ENCODE measurements at regions of chr2 and their contacts with region 1.

Region 1: GRCh38 chr2:138922973-138923563 is 142.9 kb upstream of the NXPH2 start:
- DNase-seq: peak; percentile 40
- ATAC-seq: peak; percentile 36; the same call in 2 of the 3 replicates
- H3K4me3 ChIP-seq: no peak overlapping the region
- H3K27ac ChIP-seq: no peak overlapping the region
- H3K4me1 ChIP-seq: no peaks in the 10 kb centered on the region
- H3K27me3 ChIP-seq: no peaks in the 10 kb centered on the region
- CTCF ChIP-seq: peak; percentile 59
- EP300 ChIP-seq: no peak
- POLR2A ChIP-seq: no peak
- RAD21 ChIP-seq: no peak

Region 2: DNA sequence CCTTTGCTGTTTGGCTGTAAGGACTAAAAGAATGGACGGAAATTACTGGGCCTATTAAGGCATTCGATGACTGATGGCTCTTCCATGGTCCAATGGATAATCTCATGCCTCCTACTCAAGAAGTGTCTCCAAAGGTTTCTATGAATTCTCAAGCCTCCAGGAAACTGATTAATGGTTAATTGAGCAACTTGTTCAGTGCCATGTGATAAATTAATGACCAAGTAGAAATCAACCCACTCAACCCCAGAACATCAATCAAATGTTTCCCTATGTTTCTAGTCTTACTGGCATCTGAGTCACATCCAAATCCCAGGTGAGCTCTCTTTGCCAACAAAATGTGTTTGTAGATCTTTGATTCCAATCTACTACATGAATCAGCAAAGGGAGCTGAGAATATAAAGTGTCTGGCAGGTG is 246.4 kb before region 1 on chr2:
- CTCF ChIA-PET with region 1: no interaction called
- POLR2A ChIA-PET with region 1: no interaction called
- in situ Hi-C with region 1: no loop called
- intact Hi-C with region 1: no loop called
- DNase-seq: no peak
- ATAC-seq: no peak
- H3K4me3 ChIP-seq: no peak overlapping the region
- H3K27ac ChIP-seq: no peak overlapping the region
- H3K4me1 ChIP-seq: no peaks in the 10 kb centered on the region
- H3K27me3 ChIP-seq: peaks cover 0 to 2% of the 10 kb centered on the region in 2 experiments; a peak in 1 of 5 replicates
- CTCF ChIP-seq: no peak
- EP300 ChIP-seq: no peak
- POLR2A ChIP-seq: no peak
- RAD21 ChIP-seq: no peak

Region 3: DNA sequence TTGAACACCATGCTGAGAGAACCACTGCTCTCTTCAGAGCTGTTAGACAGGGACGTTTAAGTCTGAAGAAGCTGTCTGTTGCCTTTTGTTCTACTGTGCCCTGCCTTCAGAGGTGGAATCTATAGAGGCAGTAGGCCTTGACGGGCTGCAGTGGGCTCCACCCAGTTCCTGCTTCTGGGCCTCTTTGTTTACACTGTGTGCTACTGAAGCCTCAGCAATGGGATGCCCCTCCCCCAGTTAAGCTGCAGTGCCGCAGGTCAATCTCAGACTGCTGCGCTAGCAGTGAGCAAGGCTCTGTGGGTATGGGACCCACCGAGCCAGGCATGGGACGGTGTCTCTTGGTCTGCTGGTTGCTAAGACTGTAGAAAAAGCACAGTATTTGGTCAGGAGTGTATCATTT is 19.4 kb after region 1 on chr2:
- CTCF ChIA-PET with region 1: no interaction called
- POLR2A ChIA-PET with region 1: no interaction called
- in situ Hi-C with region 1: no loop called
- intact Hi-C with region 1: no loop called
- DNase-seq: peak; percentile 82
- ATAC-seq: peak; percentile 100
- H3K4me3 ChIP-seq: peak overlapping the region; percentile 3 to 49 (median 36); a peak in 3 of 6 replicates
- H3K27ac ChIP-seq: no peak overlapping the region
- H3K4me1 ChIP-seq: peaks cover 15% of the 10 kb centered on the region
- H3K27me3 ChIP-seq: no peaks in the 10 kb centered on the region
- CTCF ChIP-seq: no peak
- EP300 ChIP-seq: no peak
- POLR2A ChIP-seq: no peak
- RAD21 ChIP-seq: no peak

Region 4: GRCh38 chr2:139353874-139354273 is 430.8 kb after region 1 on chr2:
- CTCF ChIA-PET with region 1: no interaction called
- POLR2A ChIA-PET with region 1: no interaction called
- in situ Hi-C with region 1: no loop called
- intact Hi-C with region 1: loop called (anchors 5 kb)
- DNase-seq: no peak
- ATAC-seq: no peak
- H3K4me3 ChIP-seq: no peak overlapping the region
- H3K27ac ChIP-seq: no peak overlapping the region
- H3K4me1 ChIP-seq: no peaks in the 10 kb centered on the region
- H3K27me3 ChIP-seq: no peaks in the 10 kb centered on the region
- CTCF ChIP-seq: peak; percentile 36
- EP300 ChIP-seq: no peak
- POLR2A ChIP-seq: no peak
- RAD21 ChIP-seq: no peak

Region 5: GRCh38 chr2:139836769-139837168 is 913.7 kb after region 1 on chr2:
- CTCF ChIA-PET with region 1: no interaction called
- POLR2A ChIA-PET with region 1: no interaction called
- in situ Hi-C with region 1: no loop called
- intact Hi-C with region 1: no loop called
- DNase-seq: no peak
- ATAC-seq: no peak
- H3K4me3 ChIP-seq: no peak overlapping the region
- H3K27ac ChIP-seq: no peak overlapping the region
- H3K4me1 ChIP-seq: no peaks in the 10 kb centered on the region
- H3K27me3 ChIP-seq: no peaks in the 10 kb centered on the region
- CTCF ChIP-seq: no peak
- EP300 ChIP-seq: no peak
- POLR2A ChIP-seq: no peak
- RAD21 ChIP-seq: no peak

Region 6: GRCh38 chr2:139946693-139947092 is 1023.6 kb after region 1 on chr2:
- CTCF ChIA-PET with region 1: no interaction called
- POLR2A ChIA-PET with region 1: no interaction called
- in situ Hi-C with region 1: no loop called
- intact Hi-C with region 1: loop called (anchors 5 kb)
- DNase-seq: no peak
- ATAC-seq: no peak
- H3K4me3 ChIP-seq: no peak overlapping the region
- H3K27ac ChIP-seq: no peak overlapping the region
- H3K4me1 ChIP-seq: no peaks in the 10 kb centered on the region
- H3K27me3 ChIP-seq: no peaks in the 10 kb centered on the region
- CTCF ChIP-seq: no peak
- EP300 ChIP-seq: no peak
- POLR2A ChIP-seq: no peak
- RAD21 ChIP-seq: no peak